Activated naive CD4-positive, alpha-beta T cell treated with anti-CD3 and anti-CD28 coated beads for 36 hours (primary cell): ENCODE measurements at regions of chr9 and their contacts with region 1.

Region 1: GRCh38 chr9:114385412-114386181 is 2.2 kb downstream of the AKNA start:
- DNase-seq: peak; percentile 97
- H3K4me3 Mint-ChIP-seq: peak overlapping the region; percentile 97
- H3K27ac Mint-ChIP-seq: peak overlapping the region; percentile 100
- H3K4me1 Mint-ChIP-seq: peaks cover 67% of the 10 kb centered on the region
- H3K27me3 Mint-ChIP-seq: no peaks in the 10 kb centered on the region

Region 2: GRCh38 chr9:114263853-114264510 is 121.6 kb before region 1 on chr9:
- CTCF ChIA-PET with region 1: no interaction called
- intact Hi-C with region 1: no loop called
- DNase-seq: no peak
- H3K4me3 Mint-ChIP-seq: no peak overlapping the region
- H3K27ac Mint-ChIP-seq: no peak overlapping the region
- H3K4me1 Mint-ChIP-seq: no peaks in the 10 kb centered on the region
- H3K27me3 Mint-ChIP-seq: no peaks in the 10 kb centered on the region

Region 3: DNA sequence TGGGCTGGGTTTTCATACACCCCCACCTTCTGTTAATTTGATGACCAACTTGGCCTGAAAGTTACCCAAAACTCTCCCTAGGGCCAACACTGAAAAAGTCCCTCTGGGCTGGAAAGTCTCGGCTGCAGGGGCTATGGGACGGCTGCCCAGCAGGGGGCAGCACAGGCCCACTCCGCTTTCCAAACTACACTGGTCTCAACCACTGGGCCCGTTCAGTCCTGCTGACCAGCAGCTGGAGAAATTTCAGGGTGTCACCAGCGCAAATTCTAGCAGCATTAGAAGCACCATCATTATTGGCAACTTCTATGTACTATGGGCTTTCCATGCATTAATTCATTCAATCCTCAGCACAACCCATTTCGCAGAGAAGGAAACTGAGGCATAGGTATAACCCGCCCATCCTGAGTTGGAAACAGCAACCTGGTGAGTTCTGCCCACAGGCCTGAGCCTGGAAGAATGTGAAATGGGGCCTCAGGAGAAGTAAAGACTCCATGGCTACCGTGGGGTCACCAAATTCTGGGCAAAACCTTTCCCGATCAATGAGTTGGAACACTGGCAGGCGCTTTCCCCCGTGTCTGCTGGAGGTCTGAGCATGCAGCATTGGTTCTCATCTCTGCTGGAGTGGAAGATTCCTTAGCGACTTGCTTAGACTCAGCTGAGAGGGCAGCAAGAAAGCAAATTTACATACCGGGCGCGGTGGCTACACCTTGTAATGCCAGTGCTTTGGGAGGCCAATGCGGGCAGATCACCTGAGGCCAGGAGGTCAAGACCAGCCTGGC is 46.3 kb before region 1 on chr9:
- CTCF ChIA-PET with region 1: interaction called, 46 read pairs
- intact Hi-C with region 1: loop called (anchors 1 kb)
- DNase-seq: peak; percentile 66
- H3K4me3 Mint-ChIP-seq: no peak overlapping the region
- H3K27ac Mint-ChIP-seq: peak overlapping the region; percentile 66
- H3K4me1 Mint-ChIP-seq: peaks cover 15% of the 10 kb centered on the region
- H3K27me3 Mint-ChIP-seq: no peaks in the 10 kb centered on the region

Region 4: DNA sequence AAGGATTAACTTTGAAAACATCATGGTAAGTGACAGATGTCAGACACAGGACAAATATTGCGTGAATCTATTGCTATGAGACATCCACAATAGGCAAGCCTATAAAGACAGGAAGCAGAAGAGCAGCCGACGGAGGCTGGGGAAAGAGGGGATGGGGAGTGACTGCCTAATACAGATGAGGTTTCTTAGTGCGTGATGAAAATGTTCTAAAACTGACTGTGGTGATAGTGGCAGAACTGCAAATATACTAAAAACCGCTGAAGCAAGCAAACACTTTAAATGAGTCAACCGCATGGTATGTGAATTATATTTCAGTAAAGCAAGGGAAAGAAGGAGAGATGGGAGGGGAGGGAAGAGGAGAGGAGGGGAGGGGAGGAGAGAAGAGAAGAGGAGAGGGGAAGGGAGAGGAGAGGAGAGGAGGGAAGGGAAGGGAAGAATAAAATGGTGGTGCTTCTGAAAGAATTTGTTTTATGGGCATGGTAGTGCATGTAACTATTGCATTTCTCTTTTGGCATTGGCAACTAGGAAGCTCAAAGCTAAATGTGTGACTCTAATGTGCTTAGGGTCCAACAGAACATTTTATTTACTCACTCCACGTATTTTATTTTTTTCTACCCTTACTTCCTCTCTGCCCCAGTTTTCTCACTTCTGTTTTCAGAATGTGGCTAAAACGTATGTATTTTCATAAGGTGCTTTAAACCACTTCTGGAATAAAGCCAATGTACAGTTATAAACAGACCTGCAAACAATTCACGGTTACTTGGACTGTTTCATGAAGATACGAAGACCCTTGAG is 19.1 kb before region 1 on chr9:
- CTCF ChIA-PET with region 1: interaction called, 23 read pairs
- intact Hi-C with region 1: loop called (anchors 1 kb)
- DNase-seq: peak; percentile 70
- H3K4me3 Mint-ChIP-seq: peak overlapping the region; percentile 25
- H3K27ac Mint-ChIP-seq: peak overlapping the region; percentile 93
- H3K4me1 Mint-ChIP-seq: peaks cover 77% of the 10 kb centered on the region
- H3K27me3 Mint-ChIP-seq: no peaks in the 10 kb centered on the region

Region 5: GRCh38 chr9:114397848-114398605 is 12.4 kb after region 1 on chr9:
- CTCF ChIA-PET with region 1: interaction called, 25 read pairs
- intact Hi-C with region 1: loop called (anchors 1 kb)
- DNase-seq: peak; percentile 97
- H3K4me3 Mint-ChIP-seq: peak overlapping the region; percentile 94
- H3K27ac Mint-ChIP-seq: peak overlapping the region; percentile 86
- H3K4me1 Mint-ChIP-seq: peaks cover 46% of the 10 kb centered on the region
- H3K27me3 Mint-ChIP-seq: no peaks in the 10 kb centered on the region

Region 6: GRCh38 chr9:114428466-114428865 is 42.9 kb after region 1 on chr9:
- CTCF ChIA-PET with region 1: no interaction called
- intact Hi-C with region 1: no loop called
- DNase-seq: no peak
- H3K4me3 Mint-ChIP-seq: no peak overlapping the region
- H3K27ac Mint-ChIP-seq: no peak overlapping the region
- H3K4me1 Mint-ChIP-seq: no peaks in the 10 kb centered on the region
- H3K27me3 Mint-ChIP-seq: no peaks in the 10 kb centered on the region

Region 7: GRCh38 chr9:115000217-115000639 is 614.6 kb after region 1 on chr9:
- CTCF ChIA-PET with region 1: no interaction called
- intact Hi-C with region 1: loop called (anchors 5 kb)
- DNase-seq: peak; percentile 68
- H3K4me3 Mint-ChIP-seq: peak overlapping the region; percentile 66
- H3K27ac Mint-ChIP-seq: peak overlapping the region; percentile 83
- H3K4me1 Mint-ChIP-seq: peaks cover 51% of the 10 kb centered on the region
- H3K27me3 Mint-ChIP-seq: no peaks in the 10 kb centered on the region